ENCODE measurements at regions of chr6 and their contacts with region 1.

Region 1: GRCh38 chr6:122839477-122839876 is 50.4 kb downstream of the SMPDL3A start:
- DNase-seq: no peak
- ATAC-seq: peak; percentile 93
- H3K4me3 ChIP-seq: no peak overlapping the region
- H3K27ac ChIP-seq: no peak overlapping the region
- H3K4me1 ChIP-seq: no peaks in the 10 kb centered on the region
- H3K27me3 ChIP-seq: peaks cover 0 to 3% of the 10 kb centered on the region in 2 experiments; a peak in 1 of 4 replicates
- CTCF ChIP-seq: peak; percentile 59 to 68 (median 64); a peak in 5 of 6 replicates
- EP300 ChIP-seq: no peak
- POLR2A ChIP-seq: no peak
- RAD21 ChIP-seq: peak; percentile 58

Region 2: DNA sequence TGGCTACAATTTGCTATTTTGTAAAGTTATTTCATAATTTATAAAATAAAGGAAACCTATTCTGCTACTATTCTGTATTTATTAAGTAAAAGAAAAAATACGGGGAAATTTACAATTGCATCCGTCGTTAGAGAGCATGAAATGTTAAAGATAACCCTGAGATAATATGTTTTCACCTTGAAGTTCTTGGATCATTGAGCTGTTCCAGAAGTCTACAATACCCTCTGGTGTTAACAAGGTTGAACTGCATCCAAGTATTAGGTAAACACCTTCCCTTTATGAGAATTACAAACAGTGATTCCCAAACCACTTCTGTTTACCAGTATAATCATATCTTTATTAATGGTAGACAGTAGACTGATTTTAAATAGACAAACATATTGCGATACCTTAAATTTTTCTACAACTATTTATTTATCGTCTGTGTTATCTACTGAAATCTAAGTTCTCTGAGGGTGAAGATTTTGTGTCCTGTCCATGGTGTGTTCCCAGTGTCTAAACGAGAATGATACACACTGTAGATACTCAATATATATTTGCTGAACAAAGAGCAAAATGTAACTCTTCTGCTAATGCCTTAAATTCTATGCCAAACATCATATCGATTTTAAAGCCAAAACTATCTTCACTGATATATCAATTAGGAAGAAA is 1533.4 kb before region 1 on chr6:
- CTCF ChIA-PET with region 1: no interaction called
- POLR2A ChIA-PET with region 1: no interaction called
- RAD21 ChIA-PET with region 1: no interaction called
- SMC1A ChIA-PET with region 1: no interaction called
- in situ Hi-C with region 1: no loop called
- intact Hi-C with region 1: no loop called
- DNase-seq: no peak
- ATAC-seq: peak; percentile 81
- H3K4me3 ChIP-seq: no peak overlapping the region
- H3K27ac ChIP-seq: no peak overlapping the region
- H3K4me1 ChIP-seq: no peaks in the 10 kb centered on the region
- H3K27me3 ChIP-seq: no peaks in the 10 kb centered on the region
- CTCF ChIP-seq: peak; percentile 60 to 66 (median 62); a peak in 5 of 6 replicates
- EP300 ChIP-seq: no peak
- POLR2A ChIP-seq: no peak
- RAD21 ChIP-seq: peak; percentile 88

Region 3: GRCh38 chr6:122530440-122531046 is 308.9 kb before region 1 on chr6:
- CTCF ChIA-PET with region 1: interaction called, 6 read pairs
- POLR2A ChIA-PET with region 1: no interaction called
- RAD21 ChIA-PET with region 1: interaction called, 13 read pairs
- SMC1A ChIA-PET with region 1: interaction called, 13 read pairs
- in situ Hi-C with region 1: no loop called
- intact Hi-C with region 1: no loop called
- DNase-seq: peak; percentile 27
- ATAC-seq: peak; percentile 96
- H3K4me3 ChIP-seq: no peak overlapping the region
- H3K27ac ChIP-seq: no peak overlapping the region
- H3K4me1 ChIP-seq: no peaks in the 10 kb centered on the region
- H3K27me3 ChIP-seq: no peaks in the 10 kb centered on the region
- CTCF ChIP-seq: peak; percentile 89 to 94 (median 90)
- EP300 ChIP-seq: no peak
- POLR2A ChIP-seq: no peak
- RAD21 ChIP-seq: peak; percentile 96

Region 4: GRCh38 chr6:122736163-122736562 is 103.3 kb before region 1 on chr6:
- CTCF ChIA-PET with region 1: interaction called, 640 read pairs
- POLR2A ChIA-PET with region 1: interaction called, 3 read pairs
- RAD21 ChIA-PET with region 1: interaction called, 184 read pairs
- SMC1A ChIA-PET with region 1: interaction called, 237 read pairs
- in situ Hi-C with region 1: no loop called
- intact Hi-C with region 1: no loop called
- DNase-seq: no peak
- ATAC-seq: no peak
- H3K4me3 ChIP-seq: no peak overlapping the region
- H3K27ac ChIP-seq: no peak overlapping the region
- H3K4me1 ChIP-seq: no peaks in the 10 kb centered on the region
- H3K27me3 ChIP-seq: no peaks in the 10 kb centered on the region
- CTCF ChIP-seq: no peak
- EP300 ChIP-seq: no peak
- POLR2A ChIP-seq: no peak
- RAD21 ChIP-seq: no peak

Region 5: DNA sequence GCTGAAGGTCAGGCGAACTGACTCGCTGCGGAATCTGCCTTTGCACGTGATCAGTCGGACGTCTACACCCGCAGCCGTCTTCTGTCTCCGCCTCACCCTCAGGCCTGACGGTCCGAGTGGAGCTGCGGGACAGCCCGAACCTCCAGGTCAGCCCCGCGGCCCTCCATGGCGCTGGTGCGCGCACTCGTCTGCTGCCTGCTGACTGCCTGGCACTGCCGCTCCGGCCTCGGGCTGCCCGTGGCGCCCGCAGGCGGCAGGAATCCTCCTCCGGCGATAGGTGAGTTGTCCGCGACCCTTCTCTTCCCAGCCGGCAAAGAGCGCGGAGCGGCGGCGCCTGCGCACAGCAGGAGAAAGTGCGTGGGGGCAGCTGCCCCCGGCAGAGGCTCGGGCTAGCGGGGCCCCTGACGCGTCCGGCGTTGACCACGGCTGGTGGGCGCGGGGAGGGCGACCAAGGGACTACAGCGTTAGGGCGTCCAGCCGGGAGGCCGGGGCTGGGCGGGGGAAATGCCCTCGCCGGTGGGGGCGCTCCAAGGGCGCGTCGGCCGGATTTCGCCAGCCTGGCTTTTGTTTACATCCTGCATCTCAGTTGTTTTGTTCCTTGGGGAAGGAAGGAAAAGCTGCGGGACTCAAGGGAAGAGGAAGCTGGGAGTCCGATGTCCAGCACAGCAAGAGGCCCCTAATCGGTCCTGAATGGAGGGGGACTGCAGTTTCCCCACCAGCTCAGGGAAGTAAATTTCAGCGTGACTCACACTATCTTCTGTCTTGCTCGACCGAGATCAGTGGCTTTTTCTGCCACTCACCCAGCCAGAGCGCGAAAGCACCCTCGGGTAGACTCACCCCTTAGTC is 50.1 kb before region 1 on chr6 and contains the start of gene SMPDL3A:
- CTCF ChIA-PET with region 1: interaction called, 29 read pairs
- POLR2A ChIA-PET with region 1: interaction called, 3 read pairs
- RAD21 ChIA-PET with region 1: interaction called, 19 read pairs
- SMC1A ChIA-PET with region 1: interaction called, 33 read pairs
- in situ Hi-C with region 1: no loop called
- intact Hi-C with region 1: no loop called
- DNase-seq: no peak
- ATAC-seq: peak; percentile 82
- H3K4me3 ChIP-seq: peak within 1 kb of the TSS; percentile 15; the same call in 1 of the 2 replicates
- H3K27ac ChIP-seq: no peak within 1 kb of the TSS
- H3K4me1 ChIP-seq: no peaks in the 10 kb centered on the region
- H3K27me3 ChIP-seq: peaks cover 7 to 16% of the 10 kb centered on the region in 2 experiments
- CTCF ChIP-seq: peak; percentile 3 to 38 (median 19); a peak in 2 of 6 replicates
- EP300 ChIP-seq: no peak
- POLR2A ChIP-seq: no peak
- RAD21 ChIP-seq: no peak
- polyA plus RNA-seq, gene SMPDL3A: 0.05 to 0.07 TPM

Region 6: GRCh38 chr6:122818866-122819265 is 20.6 kb before region 1 on chr6:
- CTCF ChIA-PET with region 1: interaction called, 13 read pairs
- POLR2A ChIA-PET with region 1: no interaction called
- RAD21 ChIA-PET with region 1: no interaction called
- SMC1A ChIA-PET with region 1: interaction called, 4 read pairs
- in situ Hi-C with region 1: no loop called
- intact Hi-C with region 1: no loop called
- DNase-seq: no peak
- ATAC-seq: no peak
- H3K4me3 ChIP-seq: no peak overlapping the region
- H3K27ac ChIP-seq: no peak overlapping the region
- H3K4me1 ChIP-seq: no peaks in the 10 kb centered on the region
- H3K27me3 ChIP-seq: no peaks in the 10 kb centered on the region; a peak in 1 of 4 replicates
- CTCF ChIP-seq: no peak
- EP300 ChIP-seq: no peak
- POLR2A ChIP-seq: no peak
- RAD21 ChIP-seq: no peak

Region 7: DNA sequence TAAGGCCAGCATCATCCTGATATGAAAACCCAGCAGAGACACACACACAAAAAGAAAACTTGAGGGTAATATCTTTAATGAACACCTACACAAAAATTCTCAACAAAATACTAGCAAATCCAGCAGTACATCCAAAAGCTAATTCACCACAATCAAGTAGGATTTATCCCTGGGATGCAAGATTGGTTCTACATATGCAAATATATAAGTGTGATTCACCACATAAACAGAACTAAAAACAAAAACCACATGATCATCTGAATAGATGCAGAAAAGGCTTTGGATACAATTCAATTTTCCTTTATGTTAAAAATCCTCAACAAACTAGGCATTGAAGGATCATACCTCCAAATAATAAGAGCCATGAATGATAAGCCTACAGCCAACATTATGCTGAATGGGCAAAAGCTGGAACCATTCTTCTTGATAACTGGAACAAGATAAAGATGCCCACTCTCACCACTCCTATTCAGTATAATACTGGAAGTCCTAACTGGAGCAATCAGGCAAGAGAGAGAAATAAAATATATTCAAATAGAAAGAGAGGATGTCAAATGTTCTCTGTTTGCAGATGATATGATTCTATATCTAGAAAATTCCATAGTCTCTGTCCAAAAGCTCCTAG is 122.6 kb after region 1 on chr6:
- CTCF ChIA-PET with region 1: no interaction called
- POLR2A ChIA-PET with region 1: no interaction called
- RAD21 ChIA-PET with region 1: no interaction called
- SMC1A ChIA-PET with region 1: no interaction called
- in situ Hi-C with region 1: no loop called
- intact Hi-C with region 1: no loop called
- DNase-seq: no peak
- ATAC-seq: no peak
- H3K4me3 ChIP-seq: no peak overlapping the region
- H3K27ac ChIP-seq: no peak overlapping the region
- H3K4me1 ChIP-seq: no peaks in the 10 kb centered on the region
- H3K27me3 ChIP-seq: no peaks in the 10 kb centered on the region
- CTCF ChIP-seq: no peak
- EP300 ChIP-seq: no peak
- POLR2A ChIP-seq: no peak
- RAD21 ChIP-seq: no peak